Breast epithelium (tissue), 4 donors: ENCODE measurements at regions of chr7 and their contacts with region 1.

Region 1: GRCh38 chr7:4069268-4070095 is 612.6 kb upstream of the FOXK1 start:
- DNase-seq: no peak
- H3K4me3 ChIP-seq: no peak overlapping the region
- H3K27ac ChIP-seq: no peak overlapping the region
- H3K4me1 ChIP-seq: no peaks in the 10 kb centered on the region
- H3K27me3 ChIP-seq: no peaks in the 10 kb centered on the region
- CTCF ChIP-seq: no peak
- POLR2A ChIP-seq: no peak

Region 2: GRCh38 chr7:4099651-4100050 is 30.2 kb after region 1 on chr7:
- intact Hi-C with region 1: loop called (anchors 1 kb)
- DNase-seq: no peak
- H3K4me3 ChIP-seq: no peak overlapping the region
- H3K27ac ChIP-seq: no peak overlapping the region
- H3K4me1 ChIP-seq: no peaks in the 10 kb centered on the region
- H3K27me3 ChIP-seq: no peaks in the 10 kb centered on the region
- CTCF ChIP-seq: no peak
- POLR2A ChIP-seq: no peak